Caco-2 (cell line): ENCODE measurements at regions of chr11 and their contacts with region 1.

Region 1: GRCh38 chr11:18844753-18845367 is 53.3 kb upstream of the PTPN5 start:
- DNase-seq: peak in 1 of 2 experiments; percentile 45
- H3K4me3 ChIP-seq: no peak overlapping the region
- H3K4me3 Mint-ChIP-seq: no peak overlapping the region
- H3K27ac Mint-ChIP-seq: no peak overlapping the region
- H3K4me1 ChIP-seq: peaks cover 8% of the 10 kb centered on the region
- H3K4me1 Mint-ChIP-seq: no peaks in the 10 kb centered on the region
- H3K27me3 ChIP-seq: no peaks in the 10 kb centered on the region; the same call in 1 of the 2 replicates
- H3K27me3 Mint-ChIP-seq: peaks cover 4% of the 10 kb centered on the region
- CTCF ChIP-seq: peak; percentile 60 to 87

Region 2: GRCh38 chr11:18890615-18891014 is 45.8 kb after region 1 on chr11:
- CTCF ChIA-PET with region 1: no interaction called
- POLR2A ChIA-PET with region 1: interaction called, 3 read pairs
- intact Hi-C with region 1: loop called (anchors 2 kb)
- DNase-seq: peak in 1 of 2 experiments; percentile 32
- H3K4me3 ChIP-seq: no peak overlapping the region
- H3K4me3 Mint-ChIP-seq: no peak overlapping the region
- H3K27ac Mint-ChIP-seq: no peak overlapping the region
- H3K4me1 ChIP-seq: no peaks in the 10 kb centered on the region
- H3K4me1 Mint-ChIP-seq: no peaks in the 10 kb centered on the region
- H3K27me3 ChIP-seq: no peaks in the 10 kb centered on the region
- H3K27me3 Mint-ChIP-seq: no peaks in the 10 kb centered on the region
- CTCF ChIP-seq: peak in 1 of 2 experiments; percentile 35

Region 3: DNA sequence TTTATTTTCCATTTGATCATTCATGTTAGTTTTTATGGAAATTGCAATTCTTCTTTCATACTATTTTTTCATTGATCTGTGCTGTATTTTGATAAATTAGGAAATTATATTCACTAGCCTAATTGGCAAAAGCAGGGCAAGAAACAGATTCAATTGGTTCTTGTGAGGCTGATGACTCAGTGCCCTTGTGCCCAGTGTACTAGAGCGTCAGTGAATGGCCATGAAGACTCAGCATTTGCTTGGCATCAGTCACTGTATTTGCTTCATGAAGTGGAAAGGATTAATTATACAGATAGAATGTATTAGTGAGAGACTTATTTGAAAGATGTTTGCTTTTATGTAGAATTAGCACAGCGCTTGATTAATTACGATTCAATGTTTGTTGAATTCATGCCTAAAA is 62.5 kb after region 1 on chr11:
- CTCF ChIA-PET with region 1: no interaction called
- POLR2A ChIA-PET with region 1: no interaction called
- intact Hi-C with region 1: no loop called
- DNase-seq: no peak
- H3K4me3 ChIP-seq: no peak overlapping the region
- H3K4me3 Mint-ChIP-seq: no peak overlapping the region
- H3K27ac Mint-ChIP-seq: no peak overlapping the region
- H3K4me1 ChIP-seq: peaks cover 4% of the 10 kb centered on the region
- H3K4me1 Mint-ChIP-seq: peaks cover 6% of the 10 kb centered on the region
- H3K27me3 ChIP-seq: no peaks in the 10 kb centered on the region
- H3K27me3 Mint-ChIP-seq: no peaks in the 10 kb centered on the region
- CTCF ChIP-seq: no peak

Region 4: DNA sequence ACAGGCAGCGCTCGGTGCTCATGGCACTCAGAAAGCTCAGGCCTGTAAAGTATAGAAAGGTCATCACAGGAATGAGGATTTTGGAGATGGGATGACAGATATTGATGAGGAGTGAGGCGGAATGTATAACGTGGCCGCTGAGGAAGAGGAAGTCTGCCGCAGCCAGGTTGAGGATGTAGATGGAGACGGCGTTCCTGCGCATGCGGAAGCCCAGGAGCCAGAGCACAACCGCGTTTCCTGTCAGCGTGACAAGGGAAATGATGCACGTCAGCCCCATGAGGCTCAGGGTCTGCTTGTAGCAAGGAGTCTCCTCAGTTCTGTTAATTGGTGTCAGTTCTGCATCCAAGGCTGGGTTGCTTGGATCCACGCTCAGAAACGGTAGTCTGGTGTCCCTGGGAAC is 127.5 kb after region 1 on chr11:
- CTCF ChIA-PET with region 1: no interaction called
- POLR2A ChIA-PET with region 1: no interaction called
- intact Hi-C with region 1: loop called (anchors 2 kb)
- DNase-seq: no peak
- H3K4me3 ChIP-seq: no peak overlapping the region
- H3K4me3 Mint-ChIP-seq: no peak overlapping the region
- H3K27ac Mint-ChIP-seq: peak overlapping the region; percentile 10
- H3K4me1 ChIP-seq: peaks cover 13% of the 10 kb centered on the region
- H3K4me1 Mint-ChIP-seq: peaks cover 13% of the 10 kb centered on the region
- H3K27me3 ChIP-seq: no peaks in the 10 kb centered on the region
- H3K27me3 Mint-ChIP-seq: no peaks in the 10 kb centered on the region
- CTCF ChIP-seq: no peak

Region 5: DNA sequence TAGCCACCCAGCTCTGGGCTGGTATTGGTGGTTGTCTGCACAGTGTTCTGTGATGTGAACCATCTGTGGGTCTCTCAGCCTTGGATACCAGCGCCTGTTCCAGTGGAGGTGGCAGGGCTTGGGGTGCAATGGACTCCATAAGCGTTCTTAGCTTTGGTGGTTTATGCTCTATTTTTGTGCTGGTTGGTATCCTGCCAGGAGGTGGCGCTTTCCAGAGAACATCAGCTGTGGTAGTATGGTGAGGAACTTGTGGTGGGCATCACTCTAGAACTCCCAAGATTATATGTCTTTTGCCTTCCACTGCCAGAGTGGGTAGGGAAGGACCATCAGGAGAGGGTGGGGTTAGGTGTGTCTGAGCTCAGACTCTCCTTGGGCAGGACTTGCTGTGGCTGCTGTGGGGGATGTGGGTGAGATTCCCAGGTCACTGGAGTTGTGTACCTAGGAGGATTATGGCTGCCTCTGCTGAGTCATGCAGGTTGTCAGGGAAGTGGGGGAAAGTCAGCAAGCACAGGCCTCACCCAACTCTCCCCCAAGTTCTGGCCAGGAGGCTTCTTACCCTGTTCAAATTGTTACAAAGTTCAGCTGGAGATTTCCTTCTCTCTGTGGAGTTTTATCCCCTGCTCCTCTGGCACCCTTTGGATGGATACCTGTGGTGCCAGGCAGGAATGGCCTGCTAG is 168.5 kb after region 1 on chr11:
- CTCF ChIA-PET with region 1: no interaction called
- POLR2A ChIA-PET with region 1: no interaction called
- intact Hi-C with region 1: no loop called
- DNase-seq: no peak
- H3K4me3 ChIP-seq: no peak overlapping the region
- H3K4me3 Mint-ChIP-seq: no peak overlapping the region
- H3K27ac Mint-ChIP-seq: peak overlapping the region; percentile 53
- H3K4me1 ChIP-seq: peaks cover 12% of the 10 kb centered on the region; the same call in 1 of the 2 replicates
- H3K4me1 Mint-ChIP-seq: peaks cover 13% of the 10 kb centered on the region
- H3K27me3 ChIP-seq: no peaks in the 10 kb centered on the region
- H3K27me3 Mint-ChIP-seq: no peaks in the 10 kb centered on the region
- CTCF ChIP-seq: no peak

Region 6: GRCh38 chr11:19055016-19055415 is 210.2 kb after region 1 on chr11:
- CTCF ChIA-PET with region 1: no interaction called
- POLR2A ChIA-PET with region 1: no interaction called
- intact Hi-C with region 1: loop called (anchors 5 kb)
- DNase-seq: no peak
- H3K4me3 ChIP-seq: no peak overlapping the region
- H3K4me3 Mint-ChIP-seq: no peak overlapping the region
- H3K27ac Mint-ChIP-seq: no peak overlapping the region
- H3K4me1 ChIP-seq: no peaks in the 10 kb centered on the region; the same call in 1 of the 2 replicates
- H3K4me1 Mint-ChIP-seq: no peaks in the 10 kb centered on the region
- H3K27me3 ChIP-seq: no peaks in the 10 kb centered on the region
- H3K27me3 Mint-ChIP-seq: no peaks in the 10 kb centered on the region
- CTCF ChIP-seq: no peak